CD14-positive monocyte (primary cell): ENCODE measurements at regions of chr20 and their contacts with region 1.

Region 1: DNA sequence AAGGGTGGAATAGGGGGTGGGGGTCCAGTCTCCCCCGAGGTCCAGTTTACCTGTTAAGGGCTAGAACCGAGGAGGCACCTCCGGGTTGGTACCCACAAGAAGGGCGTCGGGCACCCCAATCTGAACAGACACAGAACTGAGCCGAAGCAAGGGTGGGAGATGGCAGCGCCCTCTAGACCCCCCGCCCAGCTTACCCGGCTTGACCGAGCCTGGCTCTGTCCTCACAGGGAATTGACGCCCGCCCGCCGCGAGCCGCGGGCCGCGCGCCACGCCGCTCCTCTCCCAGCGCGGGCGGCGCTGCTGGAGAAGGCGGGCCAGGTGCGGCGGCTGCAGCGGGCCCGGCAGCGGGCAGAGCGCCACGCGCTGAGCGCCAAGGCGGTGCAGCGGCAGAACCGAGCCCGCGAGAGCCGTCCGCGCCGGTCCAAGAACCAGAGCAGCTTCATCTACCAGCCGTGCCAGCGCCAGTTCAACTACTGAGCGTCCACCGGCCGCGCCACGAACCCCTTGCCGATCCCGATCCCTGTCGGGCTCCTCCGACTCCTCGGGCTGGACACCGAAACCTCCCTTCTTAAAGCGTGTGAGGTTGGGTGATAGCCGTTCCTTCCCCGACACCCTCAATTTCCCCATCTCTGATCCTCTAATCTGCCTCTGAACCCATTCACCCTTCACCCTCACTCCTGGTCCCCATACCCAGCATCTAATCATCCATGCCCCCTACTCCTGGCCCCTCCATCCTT is 5.9 kb downstream of the TP53INP2 start:
- DNase-seq: peak; percentile 47 to 68 (median 62)
- H3K4me3 ChIP-seq: peak overlapping the region; percentile 64 to 87 (median 70)
- H3K4me3 Mint-ChIP-seq: peak overlapping the region; percentile 82 to 96
- H3K27ac ChIP-seq: no peak overlapping the region
- H3K27ac Mint-ChIP-seq: peak overlapping the region in 6 of 7 donors; percentile 66 to 89 (median 72)
- H3K4me1 ChIP-seq: peaks cover 26 to 39% of the 10 kb centered on the region in 2 donors
- H3K4me1 Mint-ChIP-seq: peaks cover 33% of the 10 kb centered on the region
- H3K27me3 ChIP-seq: peaks cover 6 to 14% of the 10 kb centered on the region in 2 donors
- H3K27me3 Mint-ChIP-seq: peaks cover 20 to 29% (median 24%) of the 10 kb centered on the region in 3 donors
- CTCF ChIP-seq: no peak

Region 2: GRCh38 chr20:34544109-34544793 is 165.7 kb before region 1 on chr20:
- intact Hi-C with region 1: loop called (anchors 5 kb)
- DNase-seq: no peak
- H3K4me3 ChIP-seq: peak overlapping the region in 1 of 3 experiments; percentile 54
- H3K4me3 Mint-ChIP-seq: peak overlapping the region; percentile 61 to 84
- H3K27ac ChIP-seq: no peak overlapping the region
- H3K27ac Mint-ChIP-seq: peak overlapping the region in 1 of 7 donors; percentile 27
- H3K4me1 ChIP-seq: peaks cover 6 to 9% of the 10 kb centered on the region in 2 donors
- H3K4me1 Mint-ChIP-seq: peaks cover 10% of the 10 kb centered on the region
- H3K27me3 ChIP-seq: peaks cover 0 to 3% of the 10 kb centered on the region in 2 donors
- H3K27me3 Mint-ChIP-seq: peaks cover 9 to 21% (median 10%) of the 10 kb centered on the region in 3 donors
- CTCF ChIP-seq: no peak

Region 3: DNA sequence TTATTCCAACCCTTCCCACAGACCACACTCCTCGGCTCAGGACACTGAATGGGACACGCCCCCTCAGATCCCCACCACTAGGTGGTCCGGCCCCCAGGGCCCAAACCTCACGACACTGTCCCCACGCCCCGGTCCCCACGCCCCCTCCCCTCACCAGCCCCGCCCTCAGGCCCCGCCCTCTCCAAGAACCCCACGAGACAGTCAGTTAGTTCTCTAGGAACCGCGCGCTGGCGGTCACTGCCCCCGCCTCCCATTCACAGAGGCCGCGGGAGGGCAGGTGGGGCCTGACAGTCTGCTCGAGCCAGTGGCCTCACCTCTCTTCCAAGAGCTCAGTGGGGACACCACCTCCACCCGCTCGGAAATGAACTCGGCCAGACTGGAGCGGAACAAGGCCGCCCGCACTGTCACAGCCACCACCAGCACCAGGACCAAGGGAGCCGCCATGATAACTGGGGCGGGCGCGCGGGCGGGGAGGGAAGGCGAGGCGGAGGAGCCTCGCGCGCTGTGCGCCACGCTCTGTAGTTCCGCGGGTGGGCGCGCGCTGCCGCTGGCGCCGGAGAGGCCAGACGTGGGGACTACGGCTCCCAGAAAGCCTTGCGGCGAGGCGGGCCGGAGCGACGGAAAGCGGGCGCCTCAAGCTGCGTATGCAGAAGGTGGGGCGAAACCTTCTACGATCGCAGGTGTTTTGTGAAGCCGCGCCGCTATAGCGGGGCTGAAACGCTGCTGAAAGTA is 33.2 kb before region 1 on chr20 and contains the start of gene PIGU:
- intact Hi-C with region 1: loop called (anchors 2 to 5 kb)
- DNase-seq: peak; percentile 92 to 93 (median 93)
- H3K4me3 ChIP-seq: peak within 1 kb of the TSS; percentile 80 to 92 (median 92)
- H3K4me3 Mint-ChIP-seq: peak within 1 kb of the TSS; percentile 94 to 95
- H3K27ac ChIP-seq: peak within 1 kb of the TSS; percentile 62 to 74
- H3K27ac Mint-ChIP-seq: peak within 1 kb of the TSS; percentile 76 to 98 (median 91)
- H3K4me1 ChIP-seq: peaks cover 28 to 33% of the 10 kb centered on the region in 2 donors
- H3K4me1 Mint-ChIP-seq: peaks cover 19% of the 10 kb centered on the region
- H3K27me3 ChIP-seq: no peaks in the 10 kb centered on the region
- H3K27me3 Mint-ChIP-seq: no peaks in the 10 kb centered on the region
- CTCF ChIP-seq: no peak
- polyA plus RNA-seq, gene PIGU: 5.8 to 11.3 (median 10.9) TPM